Vagina (tissue), 2 donors: ENCODE measurements at regions of chr22 and their contacts with region 1.

Region 1: DNA sequence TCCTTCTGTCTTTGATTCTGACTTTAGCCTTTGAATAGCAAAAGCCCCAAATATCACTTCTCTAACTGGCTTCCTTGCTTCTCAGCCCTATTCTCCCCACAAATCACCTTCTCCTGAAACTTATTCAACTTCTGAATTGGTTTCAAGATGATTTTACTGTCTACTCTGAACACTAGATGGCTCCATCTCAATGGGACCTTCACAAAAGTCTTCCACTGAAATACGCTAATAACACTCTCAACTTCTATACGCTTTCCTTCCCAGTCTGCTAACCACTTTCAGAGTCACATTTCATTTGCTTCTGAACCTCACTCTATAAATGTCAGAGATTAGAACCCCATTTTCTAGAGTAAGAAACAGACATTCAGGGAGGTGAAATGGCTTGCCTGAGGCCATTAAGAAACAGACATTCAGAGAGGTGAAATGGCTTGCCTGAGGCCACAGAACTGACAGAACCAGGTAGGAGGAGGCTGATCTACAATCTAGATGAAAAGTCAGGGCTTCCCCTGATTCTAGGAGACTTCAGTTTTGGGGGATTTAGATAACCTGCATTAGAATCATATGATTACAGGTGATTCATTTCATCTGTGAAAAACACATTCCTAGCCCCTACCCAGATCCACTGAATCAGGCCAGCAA is 20.6 kb downstream of the MORC2 start:
- DNase-seq: no peak
- H3K4me3 ChIP-seq: no peak overlapping the region
- H3K27ac ChIP-seq: peak overlapping the region; percentile 64
- H3K4me1 ChIP-seq: peaks cover 32% of the 10 kb centered on the region
- H3K27me3 ChIP-seq: no peaks in the 10 kb centered on the region
- CTCF ChIP-seq: peak in 1 of 3 experiments; percentile 67
- POLR2A ChIP-seq: no peak

Region 2: GRCh38 chr22:31496007-31496734 is 548.2 kb after region 1 on chr22 and contains the start of gene SFI1:
- intact Hi-C with region 1: loop called (anchors 10 kb)
- DNase-seq: peak in 1 of 2 donors; percentile 91
- H3K4me3 ChIP-seq: peak within 1 kb of the TSS; percentile 72 to 92
- H3K27ac ChIP-seq: peak within 1 kb of the TSS; percentile 65
- H3K4me1 ChIP-seq: peaks cover 14% of the 10 kb centered on the region
- H3K27me3 ChIP-seq: no peaks in the 10 kb centered on the region
- CTCF ChIP-seq: no peak
- POLR2A ChIP-seq: peak in 1 of 2 donors; percentile 16
- total RNA-seq, gene SFI1: 33.6 TPM